PC-3 (cell line): ENCODE measurements at regions of chr17 and their contacts with region 1.

Region 1: DNA sequence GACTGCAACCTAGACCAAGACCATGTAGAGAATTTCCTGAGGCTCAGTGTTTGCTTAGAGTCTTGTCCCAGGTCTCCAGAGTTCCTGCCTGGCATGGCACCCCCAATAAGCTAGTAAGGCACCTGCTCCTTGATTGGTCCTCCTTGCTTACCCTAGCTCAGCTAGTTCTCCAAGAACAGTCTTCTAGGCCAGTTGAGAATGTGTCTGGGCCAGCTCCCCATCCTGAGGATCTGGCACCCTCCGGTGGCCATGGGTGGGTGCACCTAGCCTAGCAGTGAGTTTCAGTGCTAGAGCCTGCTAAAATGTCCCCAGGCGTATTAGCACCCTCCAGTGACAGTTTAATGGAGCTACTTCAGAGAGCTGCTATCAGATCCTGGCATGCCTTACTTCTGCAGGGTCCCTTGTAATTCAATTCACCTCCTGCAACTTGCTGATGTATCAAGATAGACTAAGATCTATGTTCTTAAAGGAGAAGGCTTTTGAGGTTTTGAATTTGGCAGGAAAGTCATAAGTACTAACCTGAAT is 44.4 kb upstream of the MED13 start:
- DNase-seq: peak; percentile 95
- ATAC-seq: peak; percentile 83
- H3K4me3 ChIP-seq: no peak overlapping the region
- H3K27ac ChIP-seq: no peak overlapping the region
- H3K4me1 ChIP-seq: peaks cover 25% of the 10 kb centered on the region
- H3K27me3 ChIP-seq: no peaks in the 10 kb centered on the region
- CTCF ChIP-seq: peak; percentile 99

Region 2: GRCh38 chr17:61635913-61636432 is 473.5 kb before region 1 on chr17:
- CTCF ChIA-PET with region 1: no interaction called
- POLR2A ChIA-PET with region 1: no interaction called
- intact Hi-C with region 1: loop called (anchors 5 kb)
- DNase-seq: peak; percentile 86
- ATAC-seq: peak; percentile 73
- H3K4me3 ChIP-seq: no peak overlapping the region
- H3K27ac ChIP-seq: no peak overlapping the region
- H3K4me1 ChIP-seq: no peaks in the 10 kb centered on the region
- H3K27me3 ChIP-seq: no peaks in the 10 kb centered on the region
- CTCF ChIP-seq: peak; percentile 97

Region 3: GRCh38 chr17:61946359-61946758 is 163.1 kb before region 1 on chr17:
- CTCF ChIA-PET with region 1: interaction called, 6 read pairs
- POLR2A ChIA-PET with region 1: no interaction called
- intact Hi-C with region 1: loop called (anchors 5 kb)
- DNase-seq: no peak
- ATAC-seq: peak; percentile 32; the same call in 1 of the 2 replicates
- H3K4me3 ChIP-seq: no peak overlapping the region
- H3K27ac ChIP-seq: no peak overlapping the region
- H3K4me1 ChIP-seq: peaks cover 13% of the 10 kb centered on the region
- H3K27me3 ChIP-seq: no peaks in the 10 kb centered on the region
- CTCF ChIP-seq: no peak

Region 4: DNA sequence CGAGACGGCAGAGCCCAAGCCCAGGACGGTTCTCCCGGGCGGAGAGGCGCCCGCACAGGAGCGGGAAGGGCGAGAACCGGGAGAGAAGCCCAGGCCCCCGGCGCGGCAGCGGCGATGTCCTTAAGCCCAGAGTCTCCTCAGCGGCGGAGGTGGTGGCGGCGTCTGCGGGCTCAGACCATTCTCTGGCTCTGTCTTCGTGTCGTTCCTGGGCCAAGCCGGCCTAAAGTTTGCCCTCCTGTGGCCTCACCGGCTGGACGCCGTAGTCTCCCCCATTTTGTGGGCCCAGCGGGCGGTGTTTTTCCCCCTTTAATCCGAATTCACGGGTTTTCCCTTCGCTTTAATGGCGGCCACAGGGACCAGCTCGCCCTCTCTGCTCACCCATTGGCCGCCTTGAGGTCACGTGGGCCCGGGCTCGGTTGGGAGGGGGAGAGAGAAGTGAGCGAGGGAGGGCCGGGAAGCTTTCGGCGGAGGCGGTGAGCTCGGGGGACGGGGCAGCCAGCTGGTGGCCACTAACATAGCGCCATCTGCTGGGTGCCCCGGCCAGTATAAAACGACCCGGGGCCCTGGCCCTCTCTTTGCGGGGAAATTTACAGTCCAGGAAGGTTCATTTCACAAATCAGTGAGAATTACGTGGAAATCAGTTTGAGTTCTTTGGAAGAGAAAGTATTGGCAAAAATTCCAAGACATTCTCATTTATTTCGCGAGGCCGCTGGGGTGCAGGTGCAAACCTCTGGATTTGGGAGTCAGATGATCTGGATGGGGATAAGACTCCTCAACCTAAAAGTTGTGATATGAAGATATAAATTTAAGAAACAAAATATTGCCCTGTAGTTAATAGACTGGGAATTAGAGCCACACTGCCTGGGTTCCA is 43.6 kb before region 1 on chr17:
- CTCF ChIA-PET with region 1: interaction called, 43 read pairs
- POLR2A ChIA-PET with region 1: interaction called, 3 read pairs
- intact Hi-C with region 1: loop called (anchors 1 kb)
- DNase-seq: peak; percentile 99
- ATAC-seq: peak; percentile 94
- H3K4me3 ChIP-seq: peak overlapping the region; percentile 96
- H3K27ac ChIP-seq: peak overlapping the region; percentile 82
- H3K4me1 ChIP-seq: peaks cover 24% of the 10 kb centered on the region
- H3K27me3 ChIP-seq: no peaks in the 10 kb centered on the region
- CTCF ChIP-seq: peak; percentile 98

Region 5: DNA sequence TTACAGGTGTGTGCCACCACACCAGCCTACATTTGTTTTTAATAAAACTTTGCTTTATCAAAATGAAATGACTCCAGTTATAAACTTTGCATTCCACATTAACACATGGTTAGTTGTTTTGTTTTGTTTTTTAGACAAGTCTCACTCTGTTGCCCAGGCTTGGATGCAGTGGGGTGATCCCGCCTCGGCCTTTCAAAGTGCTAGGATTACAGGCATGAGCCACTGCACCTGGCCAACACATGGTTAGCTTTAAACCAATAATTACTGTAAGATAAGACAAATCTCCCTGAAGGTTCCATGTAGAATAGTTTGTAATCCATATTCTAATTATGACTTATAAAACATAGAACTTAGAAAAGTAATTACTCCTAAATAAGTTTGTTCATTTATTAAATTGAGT is 45.5 kb after region 1 on chr17:
- CTCF ChIA-PET with region 1: no interaction called
- POLR2A ChIA-PET with region 1: interaction called, 11 read pairs
- intact Hi-C with region 1: no loop called
- DNase-seq: no peak
- ATAC-seq: no peak
- H3K4me3 ChIP-seq: no peak overlapping the region
- H3K27ac ChIP-seq: no peak overlapping the region
- H3K4me1 ChIP-seq: no peaks in the 10 kb centered on the region
- H3K27me3 ChIP-seq: no peaks in the 10 kb centered on the region
- CTCF ChIP-seq: no peak

Region 6: DNA sequence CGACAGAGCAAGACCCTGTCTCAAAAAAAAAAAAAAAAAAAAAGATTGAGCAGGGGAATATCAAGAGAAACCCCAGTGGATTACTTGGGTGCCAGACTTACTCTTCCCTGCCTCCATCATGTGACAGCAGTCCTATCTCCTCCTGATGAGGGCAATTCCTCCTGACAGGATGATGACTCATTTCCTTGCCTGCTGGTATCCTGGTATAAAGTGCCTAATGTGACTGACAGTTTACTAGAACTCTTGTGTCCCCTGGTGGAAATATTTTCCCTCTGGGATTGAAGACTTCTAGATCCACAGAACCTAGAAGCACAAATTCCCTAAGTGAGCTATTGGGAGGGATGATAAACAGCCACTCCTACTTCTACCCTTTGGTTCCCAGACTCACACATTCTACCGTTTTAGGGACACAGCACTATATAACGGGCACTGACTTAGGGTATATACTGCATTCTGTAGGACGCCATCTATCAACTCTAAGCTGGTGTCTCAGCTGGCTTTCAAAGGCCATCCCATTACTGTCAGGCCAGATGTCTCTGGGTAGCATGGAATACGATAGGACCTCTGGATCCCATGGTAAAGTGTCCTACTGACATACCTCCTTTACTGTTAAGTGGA is 70.2 kb after region 1 on chr17:
- CTCF ChIA-PET with region 1: interaction called, 18 read pairs
- POLR2A ChIA-PET with region 1: interaction called, 3 read pairs
- intact Hi-C with region 1: loop called (anchors 1 kb)
- DNase-seq: peak; percentile 95
- ATAC-seq: peak; percentile 99
- H3K4me3 ChIP-seq: no peak overlapping the region
- H3K27ac ChIP-seq: peak overlapping the region; percentile 31
- H3K4me1 ChIP-seq: peaks cover 19% of the 10 kb centered on the region
- H3K27me3 ChIP-seq: no peaks in the 10 kb centered on the region
- CTCF ChIP-seq: peak; percentile 86